Activated naive CD4-positive, alpha-beta T cell treated with anti-CD3 and anti-CD28 coated beads for 36 hours (primary cell): ENCODE measurements at regions of chr2 and their contacts with region 1.

Region 1: GRCh38 chr2:112584134-112584890 is at the start of gene CHCHD5:
- DNase-seq: peak; percentile 96
- H3K4me3 Mint-ChIP-seq: peak within 1 kb of the TSS; percentile 98
- H3K27ac Mint-ChIP-seq: peak within 1 kb of the TSS; percentile 96
- H3K4me1 Mint-ChIP-seq: peaks cover 26% of the 10 kb centered on the region
- H3K27me3 Mint-ChIP-seq: no peaks in the 10 kb centered on the region
- total RNA-seq, gene CHCHD5: 40.3 to 43.5 TPM

Region 2: DNA sequence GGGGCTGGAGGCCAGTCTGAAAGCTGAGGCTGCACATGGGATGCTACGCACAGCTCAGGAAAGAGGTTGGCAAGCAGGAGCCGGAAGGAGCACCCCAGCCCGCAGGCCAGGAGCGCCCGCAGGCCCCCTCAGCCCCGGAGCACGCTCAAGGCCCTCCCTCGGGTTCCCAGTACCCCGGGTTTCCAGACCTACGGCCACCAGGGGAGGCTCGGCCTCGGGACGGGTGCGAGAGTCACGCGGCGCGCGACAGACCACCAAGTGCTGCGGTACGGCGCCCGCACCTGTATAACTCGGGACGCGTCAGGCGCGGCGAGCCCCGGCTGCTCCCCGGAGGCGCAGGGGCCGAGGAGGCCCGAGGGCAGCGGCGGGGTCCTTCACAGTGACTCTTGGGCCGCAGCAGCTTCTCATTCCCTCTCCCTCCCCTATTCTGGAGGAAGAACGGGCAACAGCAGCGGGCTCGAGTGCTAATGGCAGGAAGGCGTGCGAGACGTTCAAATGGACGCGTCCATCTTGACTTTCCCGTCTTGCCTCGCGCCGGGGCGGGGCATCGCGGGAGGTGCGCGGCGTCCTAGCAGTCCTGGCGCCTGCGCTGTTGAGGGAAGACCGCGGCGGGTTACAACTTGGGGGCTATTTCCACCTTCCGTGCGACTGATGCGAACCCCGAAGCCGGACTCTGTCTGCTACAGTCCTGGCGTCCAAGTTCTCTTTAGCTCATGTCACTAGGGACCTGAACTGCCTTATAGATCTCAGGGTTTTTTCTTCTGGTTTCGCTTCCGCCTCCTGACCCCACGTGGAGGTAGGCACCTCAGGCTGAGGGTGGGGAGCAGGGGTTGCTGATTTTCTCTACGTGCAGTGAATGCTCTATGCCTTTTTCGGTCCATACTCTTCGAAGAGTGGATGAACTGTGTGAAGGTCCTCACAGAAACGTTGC is 700.4 kb before region 1 on chr2 and contains the start of gene ANAPC1:
- CTCF ChIA-PET with region 1: no interaction called
- intact Hi-C with region 1: loop called (anchors 1 kb)
- DNase-seq: peak; percentile 88
- H3K4me3 Mint-ChIP-seq: peak within 1 kb of the TSS; percentile 98
- H3K27ac Mint-ChIP-seq: peak within 1 kb of the TSS; percentile 92
- H3K4me1 Mint-ChIP-seq: peaks cover 16% of the 10 kb centered on the region
- H3K27me3 Mint-ChIP-seq: no peaks in the 10 kb centered on the region
- total RNA-seq, gene ANAPC1: 92.5 to 104 TPM

Region 3: DNA sequence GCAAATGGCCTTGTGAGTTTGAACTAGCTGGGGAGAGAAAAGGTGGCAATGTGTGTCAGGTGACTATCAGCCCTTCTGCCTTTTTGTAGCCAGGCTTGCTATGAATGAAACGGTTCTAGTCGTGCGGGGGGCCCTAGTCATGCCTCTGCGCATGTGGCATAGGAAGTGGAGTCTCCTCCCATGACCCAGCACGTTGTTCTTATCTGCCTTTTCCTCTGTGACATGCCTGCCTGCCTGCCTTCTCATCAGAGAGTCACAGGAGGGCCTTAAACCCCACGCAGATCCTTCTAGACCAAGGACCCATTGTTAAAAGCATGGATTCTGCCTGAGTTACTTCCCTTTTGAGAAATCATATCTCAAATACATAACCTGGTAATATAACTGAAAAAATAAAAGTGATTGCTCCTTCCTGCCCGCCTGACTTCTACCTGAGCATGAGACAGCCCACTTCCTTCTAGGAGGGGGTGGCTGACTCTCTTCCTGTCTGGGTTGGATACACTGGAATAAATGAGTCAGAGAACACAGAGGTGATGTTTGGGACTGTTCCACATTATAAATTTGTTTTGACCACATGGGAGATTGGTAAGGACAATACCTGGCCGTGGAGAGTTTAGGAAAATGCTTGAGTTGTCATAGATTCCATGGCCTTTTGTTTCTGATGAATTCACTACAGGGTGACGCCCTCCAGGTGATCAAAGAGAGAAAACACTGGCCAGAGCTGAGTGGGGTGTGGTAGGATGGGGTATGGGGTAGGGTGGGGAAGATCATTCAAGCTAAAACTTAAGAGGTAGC is 396.3 kb before region 1 on chr2:
- CTCF ChIA-PET with region 1: no interaction called
- intact Hi-C with region 1: loop called (anchors 1 kb)
- DNase-seq: peak; percentile 92
- H3K4me3 Mint-ChIP-seq: peak overlapping the region; percentile 63
- H3K27ac Mint-ChIP-seq: peak overlapping the region; percentile 99
- H3K4me1 Mint-ChIP-seq: peaks cover 87% of the 10 kb centered on the region
- H3K27me3 Mint-ChIP-seq: no peaks in the 10 kb centered on the region

Region 4: DNA sequence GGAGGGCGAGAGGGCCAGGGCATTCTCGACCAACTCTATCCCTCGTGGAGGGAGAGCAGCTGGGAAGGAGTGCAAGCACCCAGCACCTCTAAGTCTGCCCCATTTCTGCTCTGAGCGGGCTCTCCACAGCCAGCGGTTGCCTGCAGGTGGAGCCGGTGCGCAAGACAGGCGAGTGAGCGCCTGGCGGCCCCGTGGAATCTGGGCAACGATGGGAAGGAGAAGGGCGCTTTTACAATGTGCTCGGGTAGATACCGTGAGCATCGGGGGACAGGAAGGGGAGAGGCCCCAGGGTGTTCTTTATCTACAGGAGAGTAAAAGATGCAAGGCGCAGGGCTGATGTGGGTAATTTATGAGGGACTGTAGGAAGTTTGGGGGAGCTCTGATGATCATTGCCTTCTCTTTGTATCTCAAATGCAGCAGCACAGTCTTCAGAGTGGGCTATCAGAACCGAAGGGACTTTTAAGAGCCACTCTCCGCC is 103.2 kb before region 1 on chr2:
- CTCF ChIA-PET with region 1: interaction called, 5 read pairs
- intact Hi-C with region 1: loop called (anchors 1 kb)
- DNase-seq: peak; percentile 91
- H3K4me3 Mint-ChIP-seq: peak overlapping the region; percentile 95
- H3K27ac Mint-ChIP-seq: peak overlapping the region; percentile 81
- H3K4me1 Mint-ChIP-seq: peaks cover 28% of the 10 kb centered on the region
- H3K27me3 Mint-ChIP-seq: no peaks in the 10 kb centered on the region

Region 5: GRCh38 chr2:112572022-112572421 is 12.3 kb before region 1 on chr2:
- CTCF ChIA-PET with region 1: no interaction called
- intact Hi-C with region 1: no loop called
- DNase-seq: no peak
- H3K4me3 Mint-ChIP-seq: no peak overlapping the region
- H3K27ac Mint-ChIP-seq: no peak overlapping the region
- H3K4me1 Mint-ChIP-seq: no peaks in the 10 kb centered on the region
- H3K27me3 Mint-ChIP-seq: no peaks in the 10 kb centered on the region

Region 6: GRCh38 chr2:112626604-112627059 is 42.3 kb after region 1 on chr2:
- CTCF ChIA-PET with region 1: interaction called, 3 read pairs
- intact Hi-C with region 1: loop called (anchors 1 kb)
- DNase-seq: peak; percentile 77
- H3K4me3 Mint-ChIP-seq: peak overlapping the region; percentile 47
- H3K27ac Mint-ChIP-seq: peak overlapping the region; percentile 76
- H3K4me1 Mint-ChIP-seq: peaks cover 63% of the 10 kb centered on the region
- H3K27me3 Mint-ChIP-seq: no peaks in the 10 kb centered on the region

Region 7: DNA sequence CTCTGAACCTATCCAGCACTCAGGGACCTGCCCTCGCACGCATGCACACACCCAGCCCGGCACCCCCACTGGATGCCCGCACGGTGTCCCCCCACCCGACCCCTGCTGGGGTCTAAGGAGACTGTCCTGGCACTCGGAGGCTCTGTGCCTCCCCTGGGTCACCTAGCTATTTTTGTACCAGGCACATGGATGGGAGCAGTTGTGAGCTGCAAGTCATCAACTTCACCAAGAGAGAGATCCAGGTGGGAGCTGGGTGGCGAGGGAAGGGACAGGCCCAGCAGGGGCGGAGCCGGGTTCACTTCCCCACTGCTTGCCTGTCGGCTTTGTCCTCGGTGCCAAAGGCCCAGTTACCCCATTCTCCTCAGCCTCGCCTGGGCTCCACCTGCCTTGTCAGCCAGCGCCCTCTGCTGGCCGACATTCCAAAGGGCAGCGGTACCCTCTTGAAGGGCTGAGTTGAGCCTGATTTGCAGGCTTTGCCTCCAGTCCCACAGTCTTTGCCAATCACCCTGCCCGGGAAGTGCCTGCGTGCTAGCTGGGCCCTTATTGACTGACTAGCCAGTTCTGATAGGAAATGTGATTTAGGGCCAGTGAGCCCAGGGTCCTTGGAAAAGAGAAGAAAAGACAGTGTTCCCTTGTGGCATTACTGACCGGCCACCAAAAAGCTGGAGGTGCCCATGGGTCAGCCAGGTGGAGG is 142.3 kb after region 1 on chr2:
- CTCF ChIA-PET with region 1: interaction called, 13 read pairs
- intact Hi-C with region 1: loop called (anchors 1 kb)
- DNase-seq: peak; percentile 93
- H3K4me3 Mint-ChIP-seq: no peak overlapping the region
- H3K27ac Mint-ChIP-seq: no peak overlapping the region
- H3K4me1 Mint-ChIP-seq: peaks cover 4% of the 10 kb centered on the region
- H3K27me3 Mint-ChIP-seq: no peaks in the 10 kb centered on the region